CD8-positive, alpha-beta T cell (primary cell): ENCODE measurements at regions of chr17 and their contacts with region 1.

Region 1: GRCh38 chr17:82962864-82963684 is 116.3 kb upstream of the METRNL start:
- DNase-seq: peak in 8 of 9 experiments; percentile 14 to 74 (median 38)
- ATAC-seq: peak; percentile 66
- H3K4me3 ChIP-seq: no peak overlapping the region
- H3K4me3 Mint-ChIP-seq: no peak overlapping the region
- H3K27ac ChIP-seq: no peak overlapping the region
- H3K27ac Mint-ChIP-seq: no peak overlapping the region
- H3K4me1 ChIP-seq: peaks cover 6% of the 10 kb centered on the region
- H3K4me1 Mint-ChIP-seq: peaks cover 6% of the 10 kb centered on the region
- H3K27me3 ChIP-seq: no peaks in the 10 kb centered on the region
- H3K27me3 Mint-ChIP-seq: no peaks in the 10 kb centered on the region
- CTCF ChIP-seq: peak; percentile 33

Region 2: GRCh38 chr17:83024218-83024971 is 61.3 kb after region 1 on chr17:
- CTCF ChIA-PET with region 1: no interaction called
- POLR2A ChIA-PET with region 1: no interaction called
- intact Hi-C with region 1: loop called in 1 of 2 experiments (anchors 10 kb)
- DNase-seq: peak in 2 of 9 experiments; percentile 19 to 32
- ATAC-seq: no peak
- H3K4me3 ChIP-seq: no peak overlapping the region
- H3K4me3 Mint-ChIP-seq: no peak overlapping the region
- H3K27ac ChIP-seq: no peak overlapping the region
- H3K27ac Mint-ChIP-seq: no peak overlapping the region
- H3K4me1 ChIP-seq: peaks cover 29% of the 10 kb centered on the region
- H3K4me1 Mint-ChIP-seq: peaks cover 36% of the 10 kb centered on the region
- H3K27me3 ChIP-seq: no peaks in the 10 kb centered on the region
- H3K27me3 Mint-ChIP-seq: no peaks in the 10 kb centered on the region
- CTCF ChIP-seq: no peak